ENCODE measurements at regions of chr9 and their contacts with region 1.

Region 1: DNA sequence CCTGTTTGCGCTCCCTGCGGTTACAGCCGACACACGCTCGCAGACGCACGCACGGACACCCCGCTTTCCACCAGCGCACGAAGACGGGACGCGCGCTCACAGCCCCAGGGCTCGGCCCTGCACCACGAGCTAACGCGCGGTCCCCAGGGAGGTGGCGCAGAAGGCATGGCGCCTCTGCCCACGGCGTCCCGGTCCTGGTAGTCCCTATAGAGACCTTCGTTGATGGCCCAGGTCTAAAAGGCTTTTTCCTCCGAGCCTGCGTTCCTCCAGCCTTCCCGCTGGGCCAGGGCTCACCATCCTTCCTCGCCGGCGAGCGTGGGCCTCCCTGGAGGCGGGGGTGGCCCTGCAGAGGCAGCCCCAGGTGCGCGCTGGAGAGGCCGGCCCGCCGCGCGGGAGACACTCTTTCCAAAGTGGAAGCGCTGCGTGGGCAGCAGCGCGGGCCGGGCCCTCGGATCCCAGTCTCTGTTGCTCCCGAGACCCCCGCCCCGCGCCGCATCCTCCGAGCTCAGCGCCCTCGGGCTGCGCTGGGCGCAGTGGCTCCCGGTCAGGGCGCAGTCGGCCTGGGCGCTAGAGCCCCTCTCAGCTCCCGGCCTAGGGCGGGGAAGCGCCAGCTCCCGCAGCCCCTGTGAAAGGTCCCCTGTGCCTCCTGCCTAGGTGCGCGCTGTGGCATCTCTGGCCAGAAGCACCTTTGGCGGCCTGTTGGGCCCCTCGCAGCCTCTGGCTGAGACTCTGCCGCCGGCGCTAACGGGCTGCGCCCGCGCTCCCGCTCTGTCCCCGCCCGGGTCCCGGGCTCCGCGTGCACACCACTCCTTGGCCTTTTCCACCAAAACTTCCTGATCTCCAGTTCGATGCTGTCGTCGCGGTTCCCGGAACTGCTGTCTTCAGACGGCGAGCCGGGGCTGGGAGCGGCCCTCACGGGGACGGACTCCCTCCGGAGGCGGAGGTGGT is 31.9 kb upstream of the FANCC start:
- DNase-seq: no peak
- ATAC-seq: peak; percentile 74

Region 2: DNA sequence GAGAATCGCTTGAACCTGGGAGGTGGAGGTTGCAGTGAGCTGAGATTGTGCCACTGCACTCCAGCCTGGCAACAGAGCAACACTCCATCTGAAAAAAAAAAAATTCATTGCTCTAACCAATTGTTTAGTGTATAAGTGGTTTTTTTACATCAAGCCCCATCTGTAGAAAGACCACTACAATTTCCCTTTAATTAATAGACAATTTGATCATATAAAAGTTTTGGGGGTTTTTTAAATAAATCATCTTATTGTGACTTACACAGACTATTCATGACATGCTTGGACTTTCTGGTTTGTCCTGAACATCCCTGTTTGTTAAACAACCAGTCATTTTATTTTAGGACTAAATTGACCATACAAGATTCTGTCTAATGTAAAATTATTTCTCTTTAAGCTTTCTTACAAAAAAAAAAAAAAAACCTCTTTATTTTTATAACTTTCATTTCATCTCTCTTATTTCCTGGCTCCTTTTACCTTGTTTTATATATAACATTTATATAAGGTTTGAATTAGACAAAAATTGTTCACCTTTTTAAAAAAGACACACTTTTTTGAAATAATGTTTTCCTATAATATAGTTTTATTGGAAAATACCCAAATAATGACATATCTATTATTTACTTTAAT is 22.0 kb before region 1 on chr9:
- intact Hi-C with region 1: loop called (anchors 2 kb)
- DNase-seq: no peak
- ATAC-seq: no peak

Region 3: GRCh38 chr9:95425910-95426551 is 76.7 kb after region 1 on chr9:
- intact Hi-C with region 1: no loop called
- DNase-seq: no peak
- ATAC-seq: peak; percentile 53

Measured in sciatic nerve (tissue), 2 donors.